ENCODE measurements at regions of chr17 and their contacts with region 1.

Region 1: GRCh38 chr17:50841949-50842354 is 6.6 kb downstream of the WFIKKN2 start:
- DNase-seq: peak; percentile 41 to 72
- ATAC-seq: peak in 2 of 3 donors; percentile 60 to 70
- H3K4me3 ChIP-seq: no peak overlapping the region
- H3K4me3 Mint-ChIP-seq: no peak overlapping the region
- H3K27ac ChIP-seq: no peak overlapping the region
- H3K27ac Mint-ChIP-seq: no peak overlapping the region
- H3K4me1 ChIP-seq: peaks cover 3% of the 10 kb centered on the region
- H3K4me1 Mint-ChIP-seq: no peaks in the 10 kb centered on the region
- H3K27me3 ChIP-seq: no peaks in the 10 kb centered on the region
- H3K27me3 Mint-ChIP-seq: no peaks in the 10 kb centered on the region
- CTCF ChIP-seq: peak; percentile 51

Region 2: GRCh38 chr17:50783193-50783660 is 58.7 kb before region 1 on chr17:
- intact Hi-C with region 1: loop called (anchors 5 kb)
- DNase-seq: peak; percentile 76 to 86
- ATAC-seq: peak; percentile 88 to 94 (median 89)
- H3K4me3 ChIP-seq: no peak overlapping the region
- H3K4me3 Mint-ChIP-seq: no peak overlapping the region
- H3K27ac ChIP-seq: no peak overlapping the region
- H3K27ac Mint-ChIP-seq: no peak overlapping the region
- H3K4me1 ChIP-seq: peaks cover 32% of the 10 kb centered on the region
- H3K4me1 Mint-ChIP-seq: peaks cover 0 to 13% of the 10 kb centered on the region in 2 donors
- H3K27me3 ChIP-seq: peaks cover 6% of the 10 kb centered on the region
- H3K27me3 Mint-ChIP-seq: peaks cover 0 to 6% of the 10 kb centered on the region in 2 donors
- CTCF ChIP-seq: peak; percentile 90

Measured in natural killer cell (primary cell).